Caco-2 (cell line): ENCODE measurements at regions of chr5 and their contacts with region 1.

Region 1: DNA sequence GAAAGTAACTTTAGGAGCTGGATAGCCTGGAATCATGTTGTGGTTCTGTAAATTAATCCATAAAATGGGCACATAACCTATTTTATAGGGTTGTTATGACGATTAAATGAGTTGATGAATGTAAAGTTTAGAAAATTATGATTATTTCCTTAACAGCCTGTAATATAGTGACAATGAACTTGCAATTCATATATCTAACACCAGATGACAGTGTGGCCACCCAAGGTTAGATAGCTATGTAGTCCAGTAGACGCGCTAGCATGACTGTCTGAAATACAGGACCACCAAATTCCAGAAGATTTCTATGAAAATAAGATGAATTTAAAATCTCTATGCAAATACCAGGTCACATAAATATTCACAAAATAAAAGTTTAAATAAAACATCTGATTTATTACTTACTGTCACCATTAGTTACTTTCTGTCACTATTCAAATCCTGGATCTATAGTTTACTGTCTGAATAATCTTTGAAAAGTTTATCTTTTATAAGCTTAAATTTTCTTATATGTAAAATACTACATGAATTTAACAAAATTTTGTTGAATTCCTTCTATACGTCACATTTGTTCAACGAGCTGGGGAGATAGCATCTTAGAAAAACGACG is 26.1 kb upstream of the MACIR start:
- DNase-seq: peak in 1 of 2 experiments; percentile 39
- H3K4me3 ChIP-seq: no peak overlapping the region
- H3K4me3 Mint-ChIP-seq: no peak overlapping the region
- H3K27ac Mint-ChIP-seq: no peak overlapping the region
- H3K4me1 ChIP-seq: no peaks in the 10 kb centered on the region
- H3K4me1 Mint-ChIP-seq: no peaks in the 10 kb centered on the region
- H3K27me3 ChIP-seq: no peaks in the 10 kb centered on the region
- H3K27me3 Mint-ChIP-seq: no peaks in the 10 kb centered on the region
- CTCF ChIP-seq: peak; percentile 70 to 85

Region 2: GRCh38 chr5:103475629-103476240 is 243.2 kb after region 1 on chr5:
- CTCF ChIA-PET with region 1: interaction called, 24 read pairs
- POLR2A ChIA-PET with region 1: no interaction called
- intact Hi-C with region 1: loop called (anchors 1 kb)
- DNase-seq: peak in 1 of 2 experiments; percentile 53
- H3K4me3 ChIP-seq: no peak overlapping the region
- H3K4me3 Mint-ChIP-seq: no peak overlapping the region
- H3K27ac Mint-ChIP-seq: no peak overlapping the region
- H3K4me1 ChIP-seq: peaks cover 8% of the 10 kb centered on the region; the same call in 1 of the 2 replicates
- H3K4me1 Mint-ChIP-seq: peaks cover 5% of the 10 kb centered on the region
- H3K27me3 ChIP-seq: no peaks in the 10 kb centered on the region
- H3K27me3 Mint-ChIP-seq: no peaks in the 10 kb centered on the region
- CTCF ChIP-seq: peak; percentile 51 to 65